WTC11 (cell line): ENCODE measurements at regions of chr3 and their contacts with region 1.

Region 1: GRCh38 chr3:196486263-196486662 is 17.3 kb downstream of the RNF168 start:
- DNase-seq: peak; percentile 30
- ATAC-seq: no peak; the same call in 1 of the 2 replicates
- H3K4me3 Mint-ChIP-seq: no peak overlapping the region
- H3K27ac Mint-ChIP-seq: peak overlapping the region; percentile 2; the same call in 1 of the 2 replicates
- H3K4me1 Mint-ChIP-seq: no peaks in the 10 kb centered on the region
- H3K27me3 Mint-ChIP-seq: no peaks in the 10 kb centered on the region
- CTCF ChIP-seq: no peak

Region 2: DNA sequence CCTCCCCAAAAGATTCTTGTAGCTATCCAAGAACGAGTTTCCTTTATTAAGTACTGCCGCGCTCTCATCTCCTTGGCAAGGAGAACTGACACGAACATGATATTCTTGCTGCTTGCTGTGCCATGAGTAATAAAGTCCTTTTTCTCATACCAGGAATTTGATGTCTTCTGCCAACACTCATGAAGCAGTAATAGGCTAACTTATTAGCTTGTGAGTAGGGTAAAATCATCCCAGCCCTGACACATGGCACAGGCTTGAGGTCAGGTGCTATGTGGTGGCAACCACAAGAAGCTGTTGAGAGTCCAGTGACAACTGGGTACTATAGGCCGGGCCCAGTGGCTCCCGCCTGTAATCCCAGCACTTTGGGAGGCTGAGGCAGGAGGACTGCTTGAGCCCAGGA is 31.3 kb before region 1 on chr3:
- CTCF ChIA-PET with region 1: no interaction called
- POLR2A ChIA-PET with region 1: no interaction called
- DNase-seq: no peak
- ATAC-seq: no peak
- H3K4me3 Mint-ChIP-seq: no peak overlapping the region
- H3K27ac Mint-ChIP-seq: no peak overlapping the region
- H3K4me1 Mint-ChIP-seq: no peaks in the 10 kb centered on the region
- H3K27me3 Mint-ChIP-seq: no peaks in the 10 kb centered on the region
- CTCF ChIP-seq: no peak

Region 3: DNA sequence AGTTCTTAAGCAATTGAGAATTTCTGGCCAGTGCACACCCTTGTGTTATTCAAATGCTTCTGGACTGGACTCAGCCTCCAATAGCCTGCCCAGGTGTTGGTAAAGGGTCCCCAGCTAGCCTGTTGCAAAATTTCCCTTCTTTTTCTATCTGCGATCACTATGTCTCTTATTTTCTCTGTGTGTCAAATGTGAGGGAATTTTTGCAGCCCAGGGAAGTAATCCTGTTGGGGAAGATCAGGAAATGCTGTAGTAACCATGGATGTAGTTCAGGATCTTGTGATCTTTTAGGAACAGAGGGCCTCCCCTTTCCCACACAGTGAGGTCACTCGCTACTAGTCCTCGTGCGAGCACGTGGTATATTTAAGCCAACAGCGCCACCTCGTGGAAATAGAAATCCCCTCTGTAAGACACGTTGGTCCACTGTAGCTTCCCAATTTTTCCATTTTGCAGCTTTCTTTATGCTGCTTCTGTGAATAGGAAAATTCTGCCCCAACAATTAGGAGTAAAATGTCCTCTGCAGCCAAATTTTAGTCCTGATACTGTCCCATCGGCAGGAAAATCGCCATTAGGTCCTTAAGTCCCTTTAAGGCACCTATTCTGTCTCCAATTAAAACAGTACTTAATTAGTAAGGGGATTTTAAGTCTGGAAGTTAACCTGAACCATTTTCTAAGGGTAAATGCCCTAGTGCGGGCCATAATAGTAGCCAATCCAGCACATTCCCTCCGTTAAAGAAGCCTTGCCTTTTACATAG is 32.9 kb after region 1 on chr3:
- CTCF ChIA-PET with region 1: interaction called, 18 read pairs
- POLR2A ChIA-PET with region 1: no interaction called
- DNase-seq: peak; percentile 80
- ATAC-seq: peak; percentile 78
- H3K4me3 Mint-ChIP-seq: no peak overlapping the region
- H3K27ac Mint-ChIP-seq: no peak overlapping the region
- H3K4me1 Mint-ChIP-seq: peaks cover 8% of the 10 kb centered on the region
- H3K27me3 Mint-ChIP-seq: peaks cover 18% of the 10 kb centered on the region
- CTCF ChIP-seq: peak; percentile 69